SK-N-SH (cell line): ENCODE measurements at regions of chr11 and their contacts with region 1.

Region 1: DNA sequence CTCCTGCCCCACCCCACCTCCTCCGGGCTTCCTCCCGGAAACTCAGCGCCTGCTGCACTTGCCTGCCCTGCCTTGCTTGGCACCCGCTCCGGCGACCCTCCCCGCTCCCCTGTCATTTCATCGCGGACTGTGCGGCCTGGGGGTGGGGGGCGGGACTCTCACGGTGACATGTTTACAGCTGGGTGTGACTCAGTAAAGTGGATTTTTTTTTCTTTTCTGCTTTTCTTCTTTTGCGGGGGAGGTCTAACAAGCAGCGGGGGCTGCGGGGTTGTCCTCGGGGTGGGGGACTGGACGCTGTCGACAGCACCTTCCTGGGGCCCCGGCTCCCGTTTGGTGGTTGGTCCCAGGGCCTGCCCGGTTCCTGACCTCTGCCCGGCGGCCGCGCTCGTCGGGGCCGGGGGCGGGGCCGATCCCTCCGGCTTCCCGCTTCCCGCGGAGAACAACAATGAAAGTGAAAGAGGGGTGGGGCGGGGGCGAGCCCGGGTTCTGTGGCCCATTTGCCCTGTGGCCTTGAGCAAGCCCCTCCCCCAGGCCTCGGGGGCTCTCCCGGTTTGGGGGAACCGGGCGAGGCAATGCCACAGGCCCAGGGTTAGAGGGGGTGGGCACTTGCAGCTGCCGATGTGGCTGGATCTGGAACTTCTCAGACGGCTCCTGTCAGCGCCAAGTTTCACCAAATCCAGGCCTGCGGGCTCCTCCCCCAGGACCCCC is 975 bp upstream of the MDK start:
- DNase-seq: peak; percentile 87
- H3K4me3 ChIP-seq: peak overlapping the region; percentile 60 to 63
- H3K27ac ChIP-seq: peak overlapping the region; percentile 61 to 88
- H3K4me1 ChIP-seq: peaks cover 10 to 23% of the 10 kb centered on the region in 2 experiments; a peak in 2 of 4 replicates
- H3K27me3 ChIP-seq: no peaks in the 10 kb centered on the region
- CTCF ChIP-seq: no peak
- EP300 ChIP-seq: no peak
- RAD21 ChIP-seq: no peak

Region 2: GRCh38 chr11:46352063-46352841 is 28.2 kb before region 1 on chr11:
- CTCF ChIA-PET with region 1: interaction called, 14 read pairs
- POLR2A ChIA-PET with region 1: no interaction called
- DNase-seq: peak; percentile 85
- H3K4me3 ChIP-seq: no peak overlapping the region; a peak in 1 of 4 replicates
- H3K27ac ChIP-seq: no peak overlapping the region
- H3K4me1 ChIP-seq: peaks cover 14 to 19% of the 10 kb centered on the region in 2 experiments; a peak in 3 of 4 replicates
- H3K27me3 ChIP-seq: no peaks in the 10 kb centered on the region
- CTCF ChIP-seq: peak; percentile 82
- EP300 ChIP-seq: no peak
- RAD21 ChIP-seq: peak; percentile 75

Region 3: DNA sequence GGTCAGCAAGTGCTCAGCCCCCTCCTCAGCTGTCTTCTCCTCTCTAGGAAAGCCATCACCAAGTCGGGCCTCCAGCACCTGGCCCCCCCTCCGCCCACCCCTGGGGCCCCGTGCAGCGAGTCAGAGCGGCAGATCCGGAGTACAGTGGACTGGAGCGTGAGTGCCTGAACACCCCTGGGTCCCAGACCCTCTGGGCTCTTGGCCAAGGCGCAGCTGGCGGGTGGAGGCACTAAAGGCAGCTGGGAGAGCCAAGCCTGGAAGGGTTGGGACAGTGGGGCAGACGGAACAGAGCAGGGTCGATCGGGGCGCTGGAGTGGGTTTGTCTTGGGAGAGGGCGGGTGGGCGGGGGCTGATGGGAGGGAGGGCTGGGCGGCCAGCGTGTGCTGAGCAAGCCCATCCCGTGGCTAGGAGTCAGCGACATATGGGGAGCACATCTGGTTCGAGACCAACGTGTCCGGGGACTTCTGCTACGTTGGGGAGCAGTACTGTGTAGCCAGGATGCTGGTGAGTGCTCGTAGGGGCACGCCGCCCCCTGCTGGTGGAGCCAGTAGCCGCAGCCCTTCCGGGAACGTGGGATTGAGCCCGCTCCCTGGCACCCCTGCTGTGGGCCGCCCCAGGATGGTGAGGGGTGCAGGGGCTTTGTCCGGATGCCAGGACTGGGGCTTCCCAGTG is 13.1 kb before region 1 on chr11:
- CTCF ChIA-PET with region 1: interaction called, 47 read pairs
- POLR2A ChIA-PET with region 1: no interaction called
- DNase-seq: peak; percentile 87
- H3K4me3 ChIP-seq: peak overlapping the region in 1 of 2 experiments; percentile 48; a peak in 1 of 4 replicates
- H3K27ac ChIP-seq: no peak overlapping the region; a peak in 1 of 4 replicates
- H3K4me1 ChIP-seq: peaks cover 17 to 41% of the 10 kb centered on the region in 2 experiments; a peak in 3 of 4 replicates
- H3K27me3 ChIP-seq: no peaks in the 10 kb centered on the region
- CTCF ChIP-seq: peak; percentile 83
- EP300 ChIP-seq: no peak
- RAD21 ChIP-seq: peak; percentile 67

Region 4: DNA sequence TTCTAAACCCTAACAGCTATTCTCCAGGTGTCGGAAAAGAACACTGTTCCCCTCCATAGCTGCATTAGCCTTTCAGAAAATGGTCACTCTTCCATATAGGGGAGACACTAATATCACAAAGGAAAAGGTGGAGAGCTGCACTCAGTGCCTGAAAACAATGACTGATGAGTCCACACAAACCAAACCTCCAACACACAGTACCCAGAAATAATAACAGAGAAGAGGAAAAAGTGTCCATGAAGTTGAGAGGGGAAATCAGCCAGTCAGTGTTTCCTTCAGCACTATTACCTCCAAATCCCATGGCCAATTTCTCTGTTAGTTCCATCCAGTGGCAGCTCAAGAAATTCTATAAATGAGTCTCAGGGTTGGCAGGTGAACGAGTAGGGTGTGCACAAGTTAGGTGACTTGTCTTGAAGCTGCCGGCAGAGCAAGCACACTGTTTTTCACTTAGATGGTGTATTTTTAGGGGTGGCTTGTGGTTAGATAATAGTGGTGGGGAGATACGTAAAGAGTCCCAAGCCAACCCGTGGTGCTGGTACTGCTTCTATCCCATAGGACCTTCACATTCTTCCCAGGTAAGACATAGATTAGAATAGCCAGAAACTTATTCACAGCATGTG is 95.5 kb after region 1 on chr11:
- CTCF ChIA-PET with region 1: interaction called, 11 read pairs
- POLR2A ChIA-PET with region 1: no interaction called
- DNase-seq: no peak
- H3K4me3 ChIP-seq: no peak overlapping the region
- H3K27ac ChIP-seq: no peak overlapping the region
- H3K4me1 ChIP-seq: peaks cover 3 to 19% of the 10 kb centered on the region in 2 experiments; a peak in 3 of 4 replicates
- H3K27me3 ChIP-seq: no peaks in the 10 kb centered on the region
- CTCF ChIP-seq: no peak
- EP300 ChIP-seq: no peak
- RAD21 ChIP-seq: no peak

Region 5: GRCh38 chr11:46537537-46538295 is 157.2 kb after region 1 on chr11:
- CTCF ChIA-PET with region 1: interaction called, 105 read pairs
- POLR2A ChIA-PET with region 1: no interaction called
- DNase-seq: peak; percentile 77
- H3K4me3 ChIP-seq: peak overlapping the region in 1 of 2 experiments; percentile 28; a peak in 1 of 4 replicates
- H3K27ac ChIP-seq: no peak overlapping the region
- H3K4me1 ChIP-seq: peaks cover 0 to 6% of the 10 kb centered on the region in 2 experiments; a peak in 2 of 4 replicates
- H3K27me3 ChIP-seq: no peaks in the 10 kb centered on the region
- CTCF ChIP-seq: peak; percentile 92
- EP300 ChIP-seq: no peak
- RAD21 ChIP-seq: peak; percentile 96